ENCODE measurements at regions of chr21 and their contacts with region 1.

Region 1: GRCh38 chr21:25734904-25735645 is at the starts of genes ATP5PF and GABPA:
- DNase-seq: peak; percentile 97
- H3K4me3 Mint-ChIP-seq: peak within 1 kb of the TSS; percentile 98
- H3K27ac Mint-ChIP-seq: peak within 1 kb of the TSS; percentile 100
- H3K4me1 Mint-ChIP-seq: peaks cover 48% of the 10 kb centered on the region
- H3K27me3 Mint-ChIP-seq: no peaks in the 10 kb centered on the region
- total RNA-seq, gene ATP5PF: 109 to 118 TPM
- total RNA-seq, gene GABPA: 25.6 to 27.7 TPM

Region 2: DNA sequence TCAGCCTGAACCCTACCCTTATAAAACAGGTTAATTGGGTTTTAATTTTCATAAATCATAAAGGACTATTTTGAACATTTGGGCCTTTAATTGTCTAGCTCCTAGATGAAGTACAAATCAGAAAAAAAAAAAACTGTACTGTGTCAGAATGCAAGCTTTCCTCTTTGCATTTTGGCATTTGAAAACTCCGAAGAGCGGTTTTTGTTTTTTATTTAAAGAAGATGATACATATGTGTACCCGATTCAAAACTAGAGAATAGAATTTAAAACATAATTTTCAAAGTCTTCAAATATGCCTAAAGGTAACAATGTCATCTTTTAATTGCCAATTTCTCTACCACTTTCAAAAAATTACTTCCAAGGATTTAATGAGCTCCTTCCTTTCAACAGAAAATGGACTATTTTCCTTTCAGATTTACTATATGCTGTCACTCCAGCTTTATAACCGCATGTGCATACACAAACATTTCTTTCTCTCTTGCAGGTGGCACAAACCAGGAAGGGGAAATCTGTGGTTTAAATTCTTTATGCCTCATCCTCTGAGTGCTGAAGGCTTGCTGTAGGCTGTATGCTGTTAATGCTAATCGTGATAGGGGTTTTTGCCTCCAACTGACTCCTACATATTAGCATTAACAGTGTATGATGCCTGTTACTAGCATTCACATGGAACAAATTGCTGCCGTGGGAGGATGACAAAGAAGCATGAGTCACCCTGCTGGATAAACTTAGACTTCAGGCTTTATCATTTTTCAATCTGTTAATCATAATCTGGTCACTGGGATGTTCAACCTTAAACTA is 161.5 kb before region 1 on chr21:
- CTCF ChIA-PET with region 1: no interaction called
- POLR2A ChIA-PET with region 1: interaction called, 11 read pairs
- DNase-seq: peak; percentile 42
- H3K4me3 Mint-ChIP-seq: peak overlapping the region; percentile 61
- H3K27ac Mint-ChIP-seq: peak overlapping the region; percentile 85
- H3K4me1 Mint-ChIP-seq: peaks cover 74% of the 10 kb centered on the region
- H3K27me3 Mint-ChIP-seq: no peaks in the 10 kb centered on the region

Region 3: GRCh38 chr21:25750085-25750484 is 15.0 kb after region 1 on chr21:
- CTCF ChIA-PET with region 1: interaction called, 3 read pairs
- POLR2A ChIA-PET with region 1: interaction called, 19 read pairs
- DNase-seq: no peak
- H3K4me3 Mint-ChIP-seq: no peak overlapping the region
- H3K27ac Mint-ChIP-seq: peak overlapping the region; percentile 25
- H3K4me1 Mint-ChIP-seq: peaks cover 11% of the 10 kb centered on the region
- H3K27me3 Mint-ChIP-seq: no peaks in the 10 kb centered on the region

Region 4: GRCh38 chr21:25831300-25831960 is 96.4 kb after region 1 on chr21:
- CTCF ChIA-PET with region 1: no interaction called
- POLR2A ChIA-PET with region 1: no interaction called
- DNase-seq: peak; percentile 45
- H3K4me3 Mint-ChIP-seq: no peak overlapping the region
- H3K27ac Mint-ChIP-seq: peak overlapping the region; percentile 58
- H3K4me1 Mint-ChIP-seq: peaks cover 19% of the 10 kb centered on the region
- H3K27me3 Mint-ChIP-seq: no peaks in the 10 kb centered on the region